Activated T-helper 1 cell treated with anti-CD3 and anti-CD28 coated beads, Interleukin-12 subunit alpha, Interleukin-12 subunit beta, Interleukin-2, Interleukin-4 antibody, amounts not matched to agents 30 ng/mL and 10 ng/mL and 1 ng/mL, durations not matched to agents 14 hours and 24 hours and 36 hours (primary cell): ENCODE measurements at regions of chr1 and their contacts with region 1.

Region 1: GRCh38 chr1:66253330-66253921 is 280.5 kb upstream of the SGIP1 start:
- DNase-seq: no peak
- H3K4me3 Mint-ChIP-seq: no peak overlapping the region
- H3K27ac Mint-ChIP-seq: no peak overlapping the region
- H3K4me1 Mint-ChIP-seq: peaks cover 68% of the 10 kb centered on the region
- H3K27me3 Mint-ChIP-seq: no peaks in the 10 kb centered on the region

Region 2: DNA sequence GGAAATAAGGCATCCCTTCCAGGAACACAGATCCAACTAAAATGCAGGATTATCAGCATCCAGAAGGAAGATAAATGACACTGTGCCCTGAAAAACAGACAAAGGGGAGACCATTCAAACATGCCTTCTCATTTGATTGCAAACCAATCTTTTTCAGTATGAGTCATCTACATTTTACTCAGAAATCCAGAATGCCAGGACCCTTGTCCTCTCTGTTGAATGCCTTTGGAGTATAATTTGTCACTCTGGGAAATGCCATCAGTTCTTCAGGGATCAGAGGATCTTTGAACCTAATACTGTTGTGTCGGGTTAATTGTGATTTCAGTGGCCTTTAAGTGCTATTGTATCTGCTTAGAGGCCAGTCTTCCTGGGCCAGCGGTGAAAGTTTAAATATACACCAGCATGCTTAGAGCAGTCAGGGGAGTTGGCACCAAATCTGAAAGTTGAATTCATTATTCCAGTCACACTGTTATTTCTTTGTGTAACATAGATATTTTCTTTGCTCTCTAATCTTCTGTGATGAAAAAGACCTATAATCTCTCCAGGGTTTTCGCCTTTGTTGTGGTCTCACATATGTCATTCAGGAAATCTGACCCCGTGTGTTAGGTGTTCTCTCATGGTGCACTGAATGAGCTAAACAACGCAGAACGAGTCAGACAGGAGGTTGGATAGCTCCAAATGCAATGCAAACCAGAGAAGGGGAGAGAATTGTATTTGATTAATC is 84.3 kb before region 1 on chr1:
- intact Hi-C with region 1: no loop called
- DNase-seq: no peak
- H3K4me3 Mint-ChIP-seq: peak overlapping the region; percentile 13
- H3K27ac Mint-ChIP-seq: no peak overlapping the region
- H3K4me1 Mint-ChIP-seq: peaks cover 29% of the 10 kb centered on the region
- H3K27me3 Mint-ChIP-seq: peaks cover 10% of the 10 kb centered on the region

Region 3: DNA sequence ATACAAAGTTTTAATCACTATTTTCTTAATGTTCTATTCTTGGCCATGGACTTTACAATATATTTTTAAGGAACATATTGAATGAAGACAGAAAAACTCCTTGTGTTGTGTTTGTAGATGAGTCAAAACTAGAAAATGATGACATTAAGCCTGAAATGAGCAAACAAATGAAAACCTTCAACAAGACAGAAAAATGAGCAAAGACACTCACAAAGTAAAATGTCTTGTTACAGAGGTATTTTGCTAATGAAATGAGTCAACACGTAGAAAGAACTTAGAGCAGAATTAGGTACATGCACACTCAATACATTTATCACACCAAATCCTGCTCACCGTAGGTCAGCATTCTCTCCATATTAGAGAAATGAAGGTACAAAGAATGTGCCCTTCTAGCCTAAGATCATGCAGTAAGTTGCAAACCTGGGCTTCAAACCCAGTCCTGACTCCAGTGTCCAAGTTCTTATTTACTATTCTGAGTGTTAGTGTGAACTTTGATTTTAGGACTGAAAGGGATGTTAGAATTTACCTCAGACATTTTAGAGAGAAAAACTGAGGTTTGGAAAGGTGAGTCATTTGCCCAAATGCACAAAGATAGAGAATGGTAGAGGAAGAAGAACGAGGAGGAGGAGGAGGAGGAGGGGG is 146.6 kb after region 1 on chr1:
- intact Hi-C with region 1: loop called (anchors 1 kb)
- DNase-seq: no peak
- H3K4me3 Mint-ChIP-seq: peak overlapping the region; percentile 67
- H3K27ac Mint-ChIP-seq: peak overlapping the region; percentile 88
- H3K4me1 Mint-ChIP-seq: peaks cover 47% of the 10 kb centered on the region
- H3K27me3 Mint-ChIP-seq: no peaks in the 10 kb centered on the region

Region 4: DNA sequence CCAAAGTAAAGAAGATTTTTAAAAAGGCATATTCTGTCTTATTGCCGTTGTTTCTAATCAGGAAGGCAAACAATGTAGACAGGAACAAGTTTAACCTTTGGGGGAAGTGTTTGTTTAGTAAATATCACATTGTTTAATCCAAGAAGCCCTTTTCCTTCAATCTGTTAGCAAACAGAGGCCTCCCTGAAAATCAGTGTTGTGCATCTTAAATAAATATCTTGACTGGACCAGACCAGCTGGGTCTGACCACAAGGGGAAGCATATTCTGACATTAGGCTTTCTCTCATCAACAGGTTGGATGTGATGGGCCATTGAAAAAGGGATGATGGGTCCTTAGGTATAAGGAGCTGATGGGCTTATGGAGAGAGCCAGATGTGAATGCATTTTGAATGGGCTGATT is 198.7 kb after region 1 on chr1:
- intact Hi-C with region 1: no loop called
- DNase-seq: no peak
- H3K4me3 Mint-ChIP-seq: no peak overlapping the region
- H3K27ac Mint-ChIP-seq: no peak overlapping the region
- H3K4me1 Mint-ChIP-seq: no peaks in the 10 kb centered on the region
- H3K27me3 Mint-ChIP-seq: peaks cover 7% of the 10 kb centered on the region